PC-9 (cell line): ENCODE measurements at regions of chr15 and their contacts with region 1.

Region 1: GRCh38 chr15:89828241-89829082 is 13.8 kb upstream of the ANPEP start:
- DNase-seq: peak; percentile 75 to 78
- H3K4me3 ChIP-seq: 0 out of 2 replicates have a peak overlapping the region, but pooled peaks have one; percentile 6
- H3K27ac ChIP-seq: peak overlapping the region; percentile 79
- H3K4me1 ChIP-seq: peaks cover 67% of the 10 kb centered on the region
- H3K27me3 ChIP-seq: no peaks in the 10 kb centered on the region
- CTCF ChIP-seq: no peak

Region 2: GRCh38 chr15:89794627-89795241 is 33.7 kb before region 1 on chr15:
- CTCF ChIA-PET with region 1: no interaction called
- POLR2A ChIA-PET with region 1: interaction called, 10 read pairs
- intact Hi-C with region 1: no loop called
- DNase-seq: no peak
- H3K4me3 ChIP-seq: no peak overlapping the region
- H3K27ac ChIP-seq: peak overlapping the region; percentile 23
- H3K4me1 ChIP-seq: peaks cover 9% of the 10 kb centered on the region
- H3K27me3 ChIP-seq: no peaks in the 10 kb centered on the region
- CTCF ChIP-seq: no peak

Region 3: GRCh38 chr15:90046911-90047392 is 218.5 kb after region 1 on chr15:
- CTCF ChIA-PET with region 1: no interaction called
- POLR2A ChIA-PET with region 1: no interaction called
- intact Hi-C with region 1: no loop called
- DNase-seq: peak; percentile 73 to 90
- H3K4me3 ChIP-seq: no peak overlapping the region
- H3K27ac ChIP-seq: peak overlapping the region; percentile 51
- H3K4me1 ChIP-seq: peaks cover 22% of the 10 kb centered on the region
- H3K27me3 ChIP-seq: no peaks in the 10 kb centered on the region
- CTCF ChIP-seq: no peak